CD4-positive, alpha-beta memory T cell (primary cell): ENCODE measurements at regions of chr14 and their contacts with region 1.

Region 1: DNA sequence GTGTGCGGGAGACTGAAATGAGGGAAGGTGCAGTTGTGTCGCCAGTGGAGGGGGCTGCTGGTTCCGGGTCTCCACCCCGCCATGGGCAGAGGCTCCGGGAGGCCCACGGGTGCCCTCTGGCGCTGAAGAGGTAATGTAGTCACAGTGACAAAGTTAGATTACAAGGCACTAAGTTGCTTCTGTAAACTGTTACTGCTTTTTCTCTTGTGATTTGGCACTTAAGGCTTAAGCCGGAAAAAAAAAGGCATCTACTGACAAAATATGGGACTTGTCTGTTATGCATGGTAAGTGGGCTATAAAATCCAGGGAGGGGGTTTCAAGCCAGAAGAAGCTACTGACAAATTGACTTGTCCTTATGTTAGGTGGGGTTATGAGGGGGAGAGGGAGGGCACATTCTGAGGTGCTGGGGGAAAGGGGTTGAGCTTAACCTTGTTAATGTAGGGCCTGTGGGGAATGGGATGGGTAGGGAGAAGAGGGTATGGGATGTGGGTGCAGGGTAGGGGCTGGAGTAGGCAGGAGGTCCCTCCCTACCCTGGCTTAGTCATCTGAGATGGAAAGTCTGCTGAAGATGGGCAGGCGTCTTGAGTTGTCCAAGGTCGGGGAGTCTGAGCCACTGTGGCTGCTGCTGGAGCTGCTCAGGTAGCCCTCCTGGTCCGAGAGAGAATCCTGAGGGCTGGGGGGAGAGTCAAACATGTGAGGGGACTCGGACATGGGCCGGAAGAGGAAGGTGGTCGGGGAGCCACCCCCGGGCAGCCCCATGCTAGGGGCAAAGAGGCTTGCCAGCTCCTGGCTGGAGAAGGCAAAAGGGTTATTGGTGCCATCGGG is 3.7 kb downstream of the ZFP36L1 start:
- DNase-seq: peak; percentile 84 to 90 (median 87)
- H3K4me3 ChIP-seq: peak overlapping the region; percentile 98 to 100
- H3K4me3 Mint-ChIP-seq: peak overlapping the region; percentile 88 to 100 (median 94)
- H3K27ac ChIP-seq: peak overlapping the region; percentile 99
- H3K27ac Mint-ChIP-seq: peak overlapping the region; percentile 96 to 100 (median 98)
- H3K4me1 ChIP-seq: peaks cover 52% of the 10 kb centered on the region
- H3K4me1 Mint-ChIP-seq: peaks cover 41 to 84% (median 53%) of the 10 kb centered on the region in 4 donors
- H3K27me3 ChIP-seq: no peaks in the 10 kb centered on the region
- H3K27me3 Mint-ChIP-seq: peaks cover 0 to 6% of the 10 kb centered on the region in 2 donors

Region 2: DNA sequence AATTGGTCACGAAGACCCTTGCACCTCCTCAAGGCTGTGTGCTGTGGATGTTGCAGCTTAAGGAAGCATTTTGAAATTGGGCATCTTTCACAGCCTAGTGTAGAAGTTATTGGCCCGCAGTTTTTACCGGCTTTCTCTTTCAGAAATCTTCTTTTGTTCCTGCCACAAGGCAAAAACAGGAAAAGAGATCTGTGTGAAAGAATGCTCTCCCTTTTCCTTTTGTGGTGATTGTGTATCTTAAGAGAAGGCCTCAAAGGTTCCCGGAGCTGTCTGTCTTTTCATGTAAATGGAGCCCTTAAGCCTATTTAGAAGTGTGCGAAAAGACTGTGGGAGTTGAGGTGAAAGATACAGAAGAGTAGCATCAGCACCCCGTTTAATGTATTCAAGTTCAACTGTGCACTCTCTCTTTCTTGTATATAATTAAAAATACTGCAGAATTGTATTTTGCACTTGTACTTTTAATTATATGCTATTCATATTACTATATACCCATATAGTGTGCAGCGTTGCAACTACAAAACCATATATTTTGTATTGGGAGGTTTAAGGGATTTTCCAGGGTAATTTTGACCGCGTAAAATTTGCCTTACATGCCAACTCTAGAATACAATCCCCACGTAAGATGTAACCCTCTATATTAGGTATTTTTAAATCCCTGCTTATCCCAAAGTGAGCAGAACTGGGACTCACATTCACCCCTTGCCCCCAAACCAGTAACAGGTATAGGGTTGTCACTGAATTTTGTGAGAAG is 527.9 kb before region 1 on chr14:
- CTCF ChIA-PET with region 1: interaction called, 4 read pairs
- POLR2A ChIA-PET with region 1: interaction called, 210 read pairs
- intact Hi-C with region 1: no loop called
- DNase-seq: no peak
- H3K4me3 ChIP-seq: peak overlapping the region in 1 of 2 donors; percentile 10
- H3K4me3 Mint-ChIP-seq: peak overlapping the region; percentile 46 to 82 (median 64)
- H3K27ac ChIP-seq: peak overlapping the region; percentile 37
- H3K27ac Mint-ChIP-seq: peak overlapping the region; percentile 87 to 96 (median 93)
- H3K4me1 ChIP-seq: peaks cover 49% of the 10 kb centered on the region
- H3K4me1 Mint-ChIP-seq: peaks cover 26 to 57% (median 46%) of the 10 kb centered on the region in 4 donors
- H3K27me3 ChIP-seq: no peaks in the 10 kb centered on the region
- H3K27me3 Mint-ChIP-seq: no peaks in the 10 kb centered on the region

Region 3: GRCh38 chr14:68292441-68293215 is 496.6 kb before region 1 on chr14:
- CTCF ChIA-PET with region 1: interaction called, 65 read pairs
- POLR2A ChIA-PET with region 1: interaction called, 207 read pairs
- intact Hi-C with region 1: no loop called
- DNase-seq: no peak
- H3K4me3 ChIP-seq: no peak overlapping the region
- H3K4me3 Mint-ChIP-seq: peak overlapping the region in 6 of 8 donors; percentile 51 to 81 (median 67)
- H3K27ac ChIP-seq: peak overlapping the region; percentile 11
- H3K27ac Mint-ChIP-seq: peak overlapping the region; percentile 76 to 94 (median 86)
- H3K4me1 ChIP-seq: peaks cover 49% of the 10 kb centered on the region
- H3K4me1 Mint-ChIP-seq: peaks cover 32 to 56% (median 39%) of the 10 kb centered on the region in 4 donors
- H3K27me3 ChIP-seq: no peaks in the 10 kb centered on the region
- H3K27me3 Mint-ChIP-seq: no peaks in the 10 kb centered on the region

Region 4: DNA sequence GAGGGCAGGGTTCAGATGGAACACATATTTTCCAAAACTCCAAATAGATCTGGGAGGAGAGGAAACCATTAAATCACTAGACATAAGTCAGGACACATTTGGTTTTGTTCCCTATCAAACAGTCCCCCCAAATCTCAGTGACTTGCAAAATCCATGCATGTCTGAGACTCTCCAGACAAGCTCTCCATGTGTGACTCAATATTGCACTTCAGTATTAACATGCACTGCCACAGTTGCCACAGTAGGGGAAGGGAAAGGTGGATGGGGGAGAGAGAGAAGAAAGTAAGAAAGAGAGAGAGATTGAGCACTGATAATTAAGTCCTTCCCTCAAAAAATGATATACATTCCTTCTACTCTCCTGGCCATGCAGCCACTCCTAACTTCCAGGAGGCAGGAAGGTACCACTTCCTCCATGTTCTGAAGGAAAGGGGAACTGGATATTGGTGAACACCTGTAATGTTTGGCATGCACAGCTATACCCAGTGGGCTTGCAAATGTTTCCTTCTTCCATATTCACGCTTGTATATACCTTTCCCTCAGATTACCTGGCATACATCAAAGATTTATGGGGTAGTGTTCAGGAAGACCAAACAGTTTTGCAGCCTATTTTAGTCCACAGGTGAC is 306.3 kb before region 1 on chr14:
- CTCF ChIA-PET with region 1: interaction called, 5 read pairs
- POLR2A ChIA-PET with region 1: interaction called, 36 read pairs
- intact Hi-C with region 1: no loop called
- DNase-seq: no peak
- H3K4me3 ChIP-seq: no peak overlapping the region
- H3K4me3 Mint-ChIP-seq: peak overlapping the region in 5 of 8 donors; percentile 16 to 72 (median 61)
- H3K27ac ChIP-seq: peak overlapping the region; percentile 18
- H3K27ac Mint-ChIP-seq: peak overlapping the region; percentile 77 to 95 (median 93)
- H3K4me1 ChIP-seq: peaks cover 43% of the 10 kb centered on the region
- H3K4me1 Mint-ChIP-seq: peaks cover 46 to 73% (median 58%) of the 10 kb centered on the region in 4 donors
- H3K27me3 ChIP-seq: no peaks in the 10 kb centered on the region
- H3K27me3 Mint-ChIP-seq: no peaks in the 10 kb centered on the region

Region 5: GRCh38 chr14:68627880-68628607 is 161.2 kb before region 1 on chr14:
- CTCF ChIA-PET with region 1: interaction called, 3 read pairs
- POLR2A ChIA-PET with region 1: interaction called, 42 read pairs
- intact Hi-C with region 1: loop called (anchors 2 kb)
- DNase-seq: peak; percentile 34 to 60 (median 47)
- H3K4me3 ChIP-seq: peak overlapping the region in 1 of 2 donors; percentile 41
- H3K4me3 Mint-ChIP-seq: peak overlapping the region; percentile 74 to 88 (median 85)
- H3K27ac ChIP-seq: no peak overlapping the region
- H3K27ac Mint-ChIP-seq: peak overlapping the region; percentile 70 to 94 (median 81)
- H3K4me1 ChIP-seq: peaks cover 10% of the 10 kb centered on the region
- H3K4me1 Mint-ChIP-seq: peaks cover 8 to 25% (median 13%) of the 10 kb centered on the region in 4 donors
- H3K27me3 ChIP-seq: no peaks in the 10 kb centered on the region
- H3K27me3 Mint-ChIP-seq: no peaks in the 10 kb centered on the region